B cell (primary cell): ENCODE measurements at regions of chr16 and their contacts with region 1.

Region 1: GRCh38 chr16:28277537-28278388 is 14.6 kb upstream of the SBK1 start:
- DNase-seq: peak; percentile 87
- ATAC-seq: peak; percentile 97
- H3K4me3 ChIP-seq: peak overlapping the region; percentile 7 to 51 (median 43)
- H3K4me3 Mint-ChIP-seq: peak overlapping the region; percentile 70
- H3K27ac ChIP-seq: no peak overlapping the region
- H3K27ac Mint-ChIP-seq: no peak overlapping the region
- H3K4me1 ChIP-seq: peaks cover 3 to 9% of the 10 kb centered on the region in 2 donors
- H3K4me1 Mint-ChIP-seq: peaks cover 10% of the 10 kb centered on the region
- H3K27me3 ChIP-seq: peaks cover 0 to 22% (median 4%) of the 10 kb centered on the region in 4 experiments
- H3K27me3 Mint-ChIP-seq: peaks cover 39% of the 10 kb centered on the region
- CTCF ChIP-seq: peak; percentile 98

Region 2: DNA sequence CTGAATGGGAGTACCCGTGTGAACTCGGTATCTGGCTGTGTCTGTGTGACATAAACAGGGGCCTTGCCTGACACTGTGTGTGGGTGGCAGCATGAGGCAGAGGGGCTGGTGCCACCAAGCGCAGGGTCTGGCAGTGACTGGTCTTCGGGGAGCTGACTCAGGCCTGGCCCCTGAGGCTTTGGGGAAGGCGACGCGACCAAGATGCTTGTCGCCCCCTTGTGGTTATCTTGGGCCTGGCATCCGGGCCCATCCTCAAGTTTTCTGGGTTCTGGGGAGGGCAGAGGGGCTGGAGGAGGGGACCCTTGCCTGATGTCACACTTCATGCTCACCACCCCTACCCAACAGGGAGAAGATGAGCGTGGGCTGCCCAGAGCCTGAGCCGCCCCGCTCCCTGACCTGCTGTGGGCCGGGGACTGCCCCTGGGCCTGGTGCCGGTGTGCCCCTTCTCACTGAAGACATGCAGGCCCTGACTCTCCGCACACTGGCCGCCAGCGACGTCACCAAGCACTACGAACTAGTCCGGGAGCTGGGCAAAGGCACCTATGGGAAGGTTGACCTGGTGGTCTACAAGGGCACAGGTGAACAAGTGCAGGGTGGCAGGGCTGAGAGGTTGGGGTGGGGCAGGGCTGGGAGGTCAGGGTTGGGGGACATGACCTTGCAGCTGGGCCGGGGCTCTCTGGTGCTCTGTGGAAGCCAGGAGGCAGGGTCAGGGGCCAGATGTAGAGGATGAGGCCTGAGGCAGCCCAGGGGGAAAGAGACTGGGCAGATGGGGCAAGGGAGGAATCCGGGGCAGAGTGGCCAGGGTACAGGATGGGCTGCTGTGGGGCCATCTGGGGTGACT is 39.5 kb after region 1 on chr16:
- CTCF ChIA-PET with region 1: interaction called, 118 read pairs
- POLR2A ChIA-PET with region 1: interaction called, 3 read pairs
- intact Hi-C with region 1: loop called (anchors 1 kb)
- DNase-seq: peak; percentile 80
- ATAC-seq: peak; percentile 67
- H3K4me3 ChIP-seq: no peak overlapping the region
- H3K4me3 Mint-ChIP-seq: no peak overlapping the region
- H3K27ac ChIP-seq: no peak overlapping the region
- H3K27ac Mint-ChIP-seq: no peak overlapping the region
- H3K4me1 ChIP-seq: peaks cover 0 to 10% of the 10 kb centered on the region in 2 donors
- H3K4me1 Mint-ChIP-seq: peaks cover 3% of the 10 kb centered on the region
- H3K27me3 ChIP-seq: no peaks in the 10 kb centered on the region
- H3K27me3 Mint-ChIP-seq: no peaks in the 10 kb centered on the region
- CTCF ChIP-seq: peak; percentile 89